Endothelial cell of umbilical vein (primary cell): ENCODE measurements at regions of chr1 and their contacts with region 1.

Region 1: DNA sequence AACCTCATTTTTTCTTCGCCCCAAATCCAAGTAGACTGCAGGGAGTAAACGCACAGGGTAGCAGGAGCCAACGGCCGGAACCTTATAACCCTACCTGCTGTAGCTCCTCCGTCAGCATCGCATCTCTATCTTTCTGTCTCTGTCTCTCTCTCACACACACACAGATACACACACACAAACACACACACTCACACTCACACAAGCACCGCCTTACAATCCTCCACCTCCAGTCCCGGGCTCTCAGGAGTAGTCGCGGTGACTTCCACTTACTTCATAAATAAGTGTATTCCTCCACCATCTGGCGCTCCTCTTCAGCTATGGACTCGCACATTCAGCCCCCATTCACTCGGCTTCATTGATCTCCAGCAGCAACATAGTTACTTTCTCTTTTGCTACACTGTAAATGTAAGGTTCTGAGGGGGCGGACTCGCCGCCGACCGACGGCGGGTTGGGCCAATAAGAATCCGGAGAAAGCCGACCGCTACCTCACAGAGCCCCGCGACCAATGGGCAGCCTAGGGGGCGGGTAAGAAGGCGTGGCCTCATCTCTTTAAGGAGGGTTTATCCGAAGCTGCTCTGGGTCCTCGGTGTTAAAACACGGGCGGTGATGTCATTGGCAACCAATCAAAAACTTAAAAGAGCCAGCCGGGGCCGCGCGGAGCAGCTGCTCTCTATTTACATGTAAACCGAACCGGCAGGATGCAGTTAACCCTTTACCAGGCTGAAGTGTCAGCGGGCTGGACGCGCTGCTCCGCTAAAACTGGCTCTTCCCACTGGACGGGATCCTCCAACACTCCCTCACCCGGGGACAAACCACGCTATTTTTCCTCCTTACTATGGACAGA is at the start of gene DUSP10:
- DNase-seq: peak; percentile 100
- H3K4me3 ChIP-seq: peak within 1 kb of the TSS; percentile 39 to 84 (median 64)
- H3K27ac ChIP-seq: peak within 1 kb of the TSS; percentile 94
- H3K4me1 ChIP-seq: peaks cover 13% of the 10 kb centered on the region
- H3K27me3 ChIP-seq: peaks cover 7 to 13% of the 10 kb centered on the region in 2 experiments
- CTCF ChIP-seq: no peak
- POLR2A ChIP-seq: no peak
- total RNA-seq, gene DUSP10: 1.6 and 1.9 TPM in 2 replicates

Region 2: GRCh38 chr1:220810179-220810653 is 931.7 kb before region 1 on chr1:
- CTCF ChIA-PET with region 1: no interaction called
- POLR2A ChIA-PET with region 1: no interaction called
- dilution Hi-C with region 1: no loop called
- intact Hi-C with region 1: loop called (anchors 2 kb)
- DNase-seq: peak; percentile 82
- H3K4me3 ChIP-seq: no peak overlapping the region
- H3K27ac ChIP-seq: no peak overlapping the region
- H3K4me1 ChIP-seq: peaks cover 8% of the 10 kb centered on the region
- H3K27me3 ChIP-seq: peaks cover 6 to 11% of the 10 kb centered on the region in 2 experiments
- CTCF ChIP-seq: peak; percentile 89 to 95
- POLR2A ChIP-seq: no peak

Region 3: DNA sequence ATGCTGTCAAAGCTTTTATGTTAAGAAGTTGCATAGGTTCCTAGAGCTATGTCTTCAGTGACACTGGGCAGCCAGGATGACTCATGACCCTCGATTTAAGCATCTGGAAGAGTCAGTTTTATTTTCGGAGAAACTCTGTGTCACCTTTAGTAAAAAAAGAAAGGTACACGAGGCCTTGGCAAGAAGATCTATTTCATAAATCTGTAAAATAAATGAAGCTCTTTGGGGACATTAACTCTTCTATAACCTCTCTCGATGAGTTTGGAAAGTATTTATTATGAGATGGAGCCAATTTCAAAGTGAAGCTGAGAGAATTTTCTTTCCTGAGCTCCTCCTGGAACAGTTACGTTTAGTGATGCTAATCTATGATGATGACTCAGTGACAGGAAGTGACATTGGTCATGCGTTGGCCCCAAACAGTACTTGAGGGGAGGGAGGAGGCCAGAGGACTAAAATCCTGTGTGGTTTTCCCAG is 706.2 kb before region 1 on chr1:
- CTCF ChIA-PET with region 1: no interaction called
- POLR2A ChIA-PET with region 1: no interaction called
- dilution Hi-C with region 1: no loop called
- intact Hi-C with region 1: loop called (anchors 10 kb)
- DNase-seq: peak; percentile 84
- H3K4me3 ChIP-seq: peak overlapping the region in 1 of 3 experiments; percentile 42
- H3K27ac ChIP-seq: peak overlapping the region; percentile 69
- H3K4me1 ChIP-seq: peaks cover 48% of the 10 kb centered on the region
- H3K27me3 ChIP-seq: no peaks in the 10 kb centered on the region
- CTCF ChIP-seq: no peak
- POLR2A ChIP-seq: no peak

Region 4: GRCh38 chr1:221667504-221667903 is 74.4 kb before region 1 on chr1:
- CTCF ChIA-PET with region 1: no interaction called
- POLR2A ChIA-PET with region 1: no interaction called
- dilution Hi-C with region 1: no loop called
- intact Hi-C with region 1: loop called (anchors 2 kb)
- DNase-seq: peak; percentile 16
- H3K4me3 ChIP-seq: no peak overlapping the region
- H3K27ac ChIP-seq: no peak overlapping the region
- H3K4me1 ChIP-seq: peaks cover 12% of the 10 kb centered on the region
- H3K27me3 ChIP-seq: peaks cover 20 to 70% of the 10 kb centered on the region in 2 experiments
- CTCF ChIP-seq: no peak
- POLR2A ChIP-seq: no peak

Region 5: GRCh38 chr1:221856224-221857093 is 114.5 kb after region 1 on chr1:
- CTCF ChIA-PET with region 1: interaction called, 11 read pairs
- POLR2A ChIA-PET with region 1: no interaction called
- dilution Hi-C with region 1: no loop called
- intact Hi-C with region 1: loop called (anchors 1 kb)
- DNase-seq: no peak
- H3K4me3 ChIP-seq: no peak overlapping the region
- H3K27ac ChIP-seq: no peak overlapping the region
- H3K4me1 ChIP-seq: no peaks in the 10 kb centered on the region
- H3K27me3 ChIP-seq: peaks cover 5% of the 10 kb centered on the region in 2 experiments
- CTCF ChIP-seq: no peak
- POLR2A ChIP-seq: no peak

Region 6: DNA sequence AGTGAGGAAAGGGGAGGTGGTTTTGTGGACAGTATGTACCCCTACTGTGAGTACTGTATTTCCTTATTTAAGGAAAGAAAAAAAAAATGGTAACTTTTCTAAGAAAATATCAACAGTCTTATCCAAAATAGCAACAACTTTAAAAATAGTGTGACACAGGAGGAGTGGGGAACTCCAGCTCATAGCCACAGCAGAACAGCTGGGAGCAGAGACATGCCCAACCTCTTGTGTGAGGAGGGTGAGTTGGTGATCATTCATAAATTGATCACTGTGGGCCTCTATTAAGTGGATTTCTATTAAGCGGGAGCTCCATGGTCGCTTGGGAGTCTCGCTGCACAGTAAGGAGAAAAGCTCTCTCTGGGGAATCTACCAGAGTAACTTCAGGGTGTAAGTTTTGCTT is 158.7 kb after region 1 on chr1:
- CTCF ChIA-PET with region 1: no interaction called
- POLR2A ChIA-PET with region 1: no interaction called
- dilution Hi-C with region 1: no loop called
- intact Hi-C with region 1: no loop called
- DNase-seq: no peak
- H3K4me3 ChIP-seq: no peak overlapping the region
- H3K27ac ChIP-seq: no peak overlapping the region
- H3K4me1 ChIP-seq: no peaks in the 10 kb centered on the region
- H3K27me3 ChIP-seq: peaks cover 0 to 6% of the 10 kb centered on the region in 2 experiments
- CTCF ChIP-seq: no peak
- POLR2A ChIP-seq: no peak

Region 7: GRCh38 chr1:221994274-221994698 is 252.4 kb after region 1 on chr1:
- CTCF ChIA-PET with region 1: interaction called, 3 read pairs
- POLR2A ChIA-PET with region 1: no interaction called
- dilution Hi-C with region 1: no loop called
- intact Hi-C with region 1: loop called (anchors 1 kb)
- DNase-seq: no peak
- H3K4me3 ChIP-seq: no peak overlapping the region
- H3K27ac ChIP-seq: no peak overlapping the region
- H3K4me1 ChIP-seq: no peaks in the 10 kb centered on the region
- H3K27me3 ChIP-seq: no peaks in the 10 kb centered on the region
- CTCF ChIP-seq: no peak
- POLR2A ChIP-seq: no peak

Region 8: GRCh38 chr1:222455188-222455879 is 713.4 kb after region 1 on chr1:
- CTCF ChIA-PET with region 1: no interaction called
- POLR2A ChIA-PET with region 1: no interaction called
- dilution Hi-C with region 1: no loop called
- intact Hi-C with region 1: loop called (anchors 5 kb)
- DNase-seq: peak; percentile 73
- H3K4me3 ChIP-seq: no peak overlapping the region
- H3K27ac ChIP-seq: no peak overlapping the region
- H3K4me1 ChIP-seq: no peaks in the 10 kb centered on the region
- H3K27me3 ChIP-seq: peaks cover 2 to 3% of the 10 kb centered on the region in 2 experiments
- CTCF ChIP-seq: peak; percentile 90 to 94
- POLR2A ChIP-seq: no peak